Endothelial cell of umbilical vein (primary cell): ENCODE measurements at regions of chr18 and their contacts with region 1.

Region 1: GRCh38 chr18:21820035-21820810 is 79.6 kb downstream of the MIB1 start:
- DNase-seq: peak; percentile 42
- H3K4me3 ChIP-seq: no peak overlapping the region
- H3K27ac ChIP-seq: no peak overlapping the region
- H3K4me1 ChIP-seq: no peaks in the 10 kb centered on the region
- H3K27me3 ChIP-seq: no peaks in the 10 kb centered on the region
- CTCF ChIP-seq: peak; percentile 34
- POLR2A ChIP-seq: no peak

Region 2: GRCh38 chr18:21191596-21192307 is 628.5 kb before region 1 on chr18:
- CTCF ChIA-PET with region 1: interaction called, 12 read pairs
- POLR2A ChIA-PET with region 1: no interaction called
- dilution Hi-C with region 1: no loop called
- intact Hi-C with region 1: no loop called
- DNase-seq: peak; percentile 24
- H3K4me3 ChIP-seq: no peak overlapping the region
- H3K27ac ChIP-seq: no peak overlapping the region
- H3K4me1 ChIP-seq: no peaks in the 10 kb centered on the region
- H3K27me3 ChIP-seq: peaks cover 1 to 2% of the 10 kb centered on the region in 2 experiments
- CTCF ChIP-seq: peak; percentile 49 to 81
- POLR2A ChIP-seq: no peak

Region 3: DNA sequence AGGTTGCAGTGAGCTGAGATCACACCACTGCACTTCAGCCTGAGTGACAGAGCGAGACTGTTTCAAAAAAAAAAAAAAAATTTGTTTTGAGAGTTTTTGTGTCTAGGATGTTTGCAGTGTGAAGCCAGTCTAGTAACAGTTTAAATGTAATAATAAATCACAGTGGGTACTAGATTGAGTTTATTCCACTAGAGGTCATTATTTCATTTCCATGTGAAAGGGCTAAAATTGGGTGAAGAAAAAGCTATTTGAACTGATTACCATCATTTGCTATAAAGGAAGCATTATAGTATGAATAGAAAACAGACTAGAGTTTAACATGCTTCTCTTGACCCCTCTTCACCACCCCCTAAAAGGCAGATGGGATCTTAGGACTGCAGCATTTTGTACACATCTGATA is 187.8 kb before region 1 on chr18:
- CTCF ChIA-PET with region 1: interaction called, 13 read pairs
- POLR2A ChIA-PET with region 1: no interaction called
- dilution Hi-C with region 1: no loop called
- intact Hi-C with region 1: no loop called
- DNase-seq: peak; percentile 23
- H3K4me3 ChIP-seq: no peak overlapping the region
- H3K27ac ChIP-seq: no peak overlapping the region
- H3K4me1 ChIP-seq: peaks cover 7% of the 10 kb centered on the region
- H3K27me3 ChIP-seq: no peaks in the 10 kb centered on the region
- CTCF ChIP-seq: no peak
- POLR2A ChIP-seq: no peak

Region 4: DNA sequence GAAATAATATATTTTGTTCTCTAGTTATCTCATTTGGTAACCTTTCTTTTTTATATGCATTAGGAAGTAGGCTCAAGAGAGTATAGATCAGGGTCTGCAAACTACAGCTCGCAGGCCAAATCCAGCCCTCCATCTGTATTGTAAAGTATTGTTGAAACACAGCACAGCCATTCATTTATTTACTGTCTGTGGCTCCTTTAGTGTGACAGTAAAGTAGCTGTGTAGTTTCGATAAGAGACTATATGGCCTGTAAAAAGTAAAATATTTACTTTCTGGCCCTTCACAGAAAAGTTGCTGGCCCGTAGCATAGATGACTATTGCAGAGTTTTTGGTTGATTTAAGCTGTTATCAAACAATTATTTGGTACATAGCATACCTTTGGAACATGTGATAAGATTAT is 12.0 kb before region 1 on chr18:
- CTCF ChIA-PET with region 1: interaction called, 15 read pairs
- POLR2A ChIA-PET with region 1: no interaction called
- dilution Hi-C with region 1: no loop called
- intact Hi-C with region 1: no loop called
- DNase-seq: no peak
- H3K4me3 ChIP-seq: no peak overlapping the region
- H3K27ac ChIP-seq: no peak overlapping the region
- H3K4me1 ChIP-seq: no peaks in the 10 kb centered on the region
- H3K27me3 ChIP-seq: no peaks in the 10 kb centered on the region
- CTCF ChIP-seq: no peak
- POLR2A ChIP-seq: no peak

Region 5: DNA sequence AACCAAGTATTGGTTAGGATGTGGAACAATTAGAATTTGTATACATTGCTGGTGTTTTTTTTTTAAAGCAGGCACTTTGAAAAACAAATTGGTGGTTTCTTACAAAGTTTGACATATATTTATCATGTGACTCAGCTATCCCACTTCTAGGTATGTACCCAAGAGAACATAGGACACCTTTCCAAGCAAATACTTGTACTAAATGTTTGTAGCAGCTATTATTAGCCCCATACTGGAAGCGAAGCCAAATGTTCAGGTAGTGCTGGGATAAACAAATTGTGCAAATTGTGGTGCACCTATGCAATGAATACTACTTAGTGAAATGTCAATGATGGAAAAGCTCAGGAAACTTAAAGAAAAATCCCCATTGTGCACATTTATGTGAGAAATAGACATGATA is 21.3 kb after region 1 on chr18:
- CTCF ChIA-PET with region 1: interaction called, 18 read pairs
- POLR2A ChIA-PET with region 1: interaction called, 4 read pairs
- dilution Hi-C with region 1: no loop called
- intact Hi-C with region 1: no loop called
- DNase-seq: no peak
- H3K4me3 ChIP-seq: no peak overlapping the region
- H3K27ac ChIP-seq: no peak overlapping the region
- H3K4me1 ChIP-seq: no peaks in the 10 kb centered on the region
- H3K27me3 ChIP-seq: no peaks in the 10 kb centered on the region
- CTCF ChIP-seq: no peak
- POLR2A ChIP-seq: no peak

Region 6: GRCh38 chr18:21955757-21956652 is 135.8 kb after region 1 on chr18:
- CTCF ChIA-PET with region 1: interaction called, 11 read pairs
- POLR2A ChIA-PET with region 1: no interaction called
- dilution Hi-C with region 1: no loop called
- intact Hi-C with region 1: no loop called
- DNase-seq: peak; percentile 66
- H3K4me3 ChIP-seq: no peak overlapping the region
- H3K27ac ChIP-seq: no peak overlapping the region
- H3K4me1 ChIP-seq: no peaks in the 10 kb centered on the region
- H3K27me3 ChIP-seq: peaks cover 3 to 8% of the 10 kb centered on the region in 2 experiments
- CTCF ChIP-seq: peak; percentile 86 to 94
- POLR2A ChIP-seq: no peak